ENCODE measurements at regions of chr20 and their contacts with region 1.

Region 1: DNA sequence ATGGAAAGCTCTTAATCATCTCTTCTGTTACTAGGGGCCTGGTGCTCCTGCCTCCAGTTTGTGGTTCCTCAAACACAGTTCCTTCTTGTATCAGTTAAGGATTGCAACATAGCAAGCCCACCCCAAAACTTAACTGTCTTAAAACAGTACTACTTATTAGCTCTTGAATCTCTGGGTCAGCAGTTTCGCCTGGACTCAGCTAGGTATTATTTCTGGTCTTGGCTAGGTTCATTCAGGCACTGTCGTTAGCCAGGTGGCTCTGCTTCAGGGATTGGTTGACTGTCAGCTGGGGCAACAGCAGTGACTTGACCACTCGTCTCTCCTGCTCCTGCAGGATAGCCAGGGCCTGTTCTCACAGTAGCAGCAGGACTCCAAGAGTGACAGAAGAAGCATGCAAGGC is 30.0 kb upstream of the RALY start:
- DNase-seq: no peak
- H3K27ac ChIP-seq: no peak overlapping the region
- CTCF ChIP-seq: no peak

Region 2: GRCh38 chr20:34269996-34270627 is 306.4 kb after region 1 on chr20:
- CTCF ChIA-PET with region 1: no interaction called
- POLR2A ChIA-PET with region 1: interaction called, 12 read pairs
- DNase-seq: no peak
- H3K27ac ChIP-seq: no peak overlapping the region
- CTCF ChIP-seq: no peak

Measured in RWPE1 (cell line).